Naive thymus-derived CD4-positive, alpha-beta T cell (primary cell): ENCODE measurements at regions of chr1 and their contacts with region 1.

Region 1: GRCh38 chr1:154760469-154760933 is 109.6 kb downstream of the KCNN3 start:
- DNase-seq: peak; percentile 73 to 91 (median 83)
- ATAC-seq: peak; percentile 98
- H3K4me3 ChIP-seq: peak overlapping the region; percentile 47
- H3K4me3 Mint-ChIP-seq: peak overlapping the region; percentile 29 to 79 (median 74)
- H3K27ac ChIP-seq: peak overlapping the region; percentile 59
- H3K27ac Mint-ChIP-seq: peak overlapping the region in 5 of 9 donors; percentile 62 to 97 (median 79)
- H3K4me1 ChIP-seq: peaks cover 8 to 24% of the 10 kb centered on the region in 2 donors
- H3K4me1 Mint-ChIP-seq: peaks cover 24 to 47% (median 40%) of the 10 kb centered on the region in 7 donors
- H3K27me3 ChIP-seq: peaks cover 0 to 8% of the 10 kb centered on the region in 2 donors
- H3K27me3 Mint-ChIP-seq: peaks cover 0 to 23% (median 5%) of the 10 kb centered on the region in 5 donors

Region 2: GRCh38 chr1:154669464-154670282 is 90.8 kb before region 1 on chr1:
- CTCF ChIA-PET with region 1: interaction called, 18 read pairs
- POLR2A ChIA-PET with region 1: no interaction called
- intact Hi-C with region 1: loop called (anchors 1 kb)
- DNase-seq: peak; percentile 40 to 81 (median 73)
- ATAC-seq: peak; percentile 100
- H3K4me3 ChIP-seq: no peak overlapping the region
- H3K4me3 Mint-ChIP-seq: no peak overlapping the region
- H3K27ac ChIP-seq: no peak overlapping the region
- H3K27ac Mint-ChIP-seq: peak overlapping the region in 1 of 9 donors; percentile 30
- H3K4me1 ChIP-seq: no peaks in the 10 kb centered on the region
- H3K4me1 Mint-ChIP-seq: peaks cover 0 to 13% (median 5%) of the 10 kb centered on the region in 7 donors
- H3K27me3 ChIP-seq: no peaks in the 10 kb centered on the region
- H3K27me3 Mint-ChIP-seq: peaks cover 0 to 4% (median 0%) of the 10 kb centered on the region in 5 donors

Region 3: GRCh38 chr1:154695985-154696384 is 64.5 kb before region 1 on chr1:
- CTCF ChIA-PET with region 1: no interaction called
- POLR2A ChIA-PET with region 1: no interaction called
- intact Hi-C with region 1: no loop called
- DNase-seq: no peak
- ATAC-seq: no peak
- H3K4me3 ChIP-seq: no peak overlapping the region
- H3K4me3 Mint-ChIP-seq: no peak overlapping the region
- H3K27ac ChIP-seq: no peak overlapping the region
- H3K27ac Mint-ChIP-seq: no peak overlapping the region
- H3K4me1 ChIP-seq: no peaks in the 10 kb centered on the region
- H3K4me1 Mint-ChIP-seq: peaks cover 0 to 5% (median 0%) of the 10 kb centered on the region in 7 donors
- H3K27me3 ChIP-seq: no peaks in the 10 kb centered on the region
- H3K27me3 Mint-ChIP-seq: peaks cover 0 to 29% (median 3%) of the 10 kb centered on the region in 5 donors

Region 4: GRCh38 chr1:154747740-154748404 is 12.6 kb before region 1 on chr1:
- CTCF ChIA-PET with region 1: interaction called, 23 read pairs
- POLR2A ChIA-PET with region 1: interaction called, 7 read pairs
- intact Hi-C with region 1: loop called (anchors 1 kb)
- DNase-seq: peak in 8 of 9 donors; percentile 51 to 64 (median 56)
- ATAC-seq: peak; percentile 82
- H3K4me3 ChIP-seq: peak overlapping the region; percentile 46
- H3K4me3 Mint-ChIP-seq: peak overlapping the region; percentile 71 to 88 (median 84)
- H3K27ac ChIP-seq: peak overlapping the region; percentile 73
- H3K27ac Mint-ChIP-seq: peak overlapping the region; percentile 90 to 98 (median 96)
- H3K4me1 ChIP-seq: peaks cover 39 to 47% of the 10 kb centered on the region in 2 donors
- H3K4me1 Mint-ChIP-seq: peaks cover 46 to 70% (median 51%) of the 10 kb centered on the region in 7 donors
- H3K27me3 ChIP-seq: no peaks in the 10 kb centered on the region
- H3K27me3 Mint-ChIP-seq: peaks cover 0 to 24% (median 0%) of the 10 kb centered on the region in 5 donors

Region 5: GRCh38 chr1:154784924-154785531 is 24.5 kb after region 1 on chr1:
- CTCF ChIA-PET with region 1: interaction called, 13 read pairs
- POLR2A ChIA-PET with region 1: interaction called, 3 read pairs
- intact Hi-C with region 1: loop called in 1 of 2 experiments (anchors 1 kb)
- DNase-seq: peak in 8 of 9 donors; percentile 37 to 87 (median 84)
- ATAC-seq: peak; percentile 94
- H3K4me3 ChIP-seq: peak overlapping the region; percentile 16
- H3K4me3 Mint-ChIP-seq: peak overlapping the region; percentile 45 to 84 (median 69)
- H3K27ac ChIP-seq: peak overlapping the region; percentile 78
- H3K27ac Mint-ChIP-seq: peak overlapping the region; percentile 94 to 99 (median 98)
- H3K4me1 ChIP-seq: peaks cover 15 to 33% of the 10 kb centered on the region in 2 donors
- H3K4me1 Mint-ChIP-seq: peaks cover 25 to 73% (median 54%) of the 10 kb centered on the region in 7 donors
- H3K27me3 ChIP-seq: no peaks in the 10 kb centered on the region
- H3K27me3 Mint-ChIP-seq: no peaks in the 10 kb centered on the region

Region 6: GRCh38 chr1:154870115-154870571 is 109.6 kb after region 1 on chr1 and contains the start of gene KCNN3:
- CTCF ChIA-PET with region 1: no interaction called
- POLR2A ChIA-PET with region 1: no interaction called
- intact Hi-C with region 1: loop called in 1 of 2 experiments (anchors 5 kb)
- DNase-seq: peak; percentile 44 to 77 (median 66)
- ATAC-seq: peak; percentile 99
- H3K4me3 ChIP-seq: no peak within 1 kb of the TSS
- H3K4me3 Mint-ChIP-seq: peak within 1 kb of the TSS in 8 of 10 donors; percentile 8 to 67 (median 34)
- H3K27ac ChIP-seq: no peak within 1 kb of the TSS
- H3K27ac Mint-ChIP-seq: peak within 1 kb of the TSS in 1 of 9 donors; percentile 28
- H3K4me1 ChIP-seq: no peaks in the 10 kb centered on the region
- H3K4me1 Mint-ChIP-seq: peaks cover 12 to 35% (median 30%) of the 10 kb centered on the region in 7 donors
- H3K27me3 ChIP-seq: peaks cover 0 to 3% of the 10 kb centered on the region in 2 donors
- H3K27me3 Mint-ChIP-seq: peaks cover 31 to 56% (median 42%) of the 10 kb centered on the region in 5 donors
- total RNA-seq, gene KCNN3: 0.05 to 0.29 (median 0.15) TPM in 4 of 5 experiments, not detected in the other